K562 (cell line): ENCODE measurements at regions of chr14 and their contacts with region 1.

Region 1: GRCh38 chr14:101972268-101972774 is 7.9 kb downstream of the DYNC1H1 start:
- DNase-seq: peak; percentile 39 to 72 (median 46)
- ATAC-seq: peak; percentile 89
- H3K4me3 ChIP-seq: no peak overlapping the region; the same call in 1 of the 2 replicates
- H3K27ac ChIP-seq: peak overlapping the region; percentile 63
- H3K4me1 ChIP-seq: peaks cover 0 to 13% of the 10 kb centered on the region in 2 experiments; a peak in 3 of 5 replicates
- H3K27me3 ChIP-seq: no peaks in the 10 kb centered on the region
- CTCF ChIP-seq: no peak
- EP300 ChIP-seq: 0 out of 2 replicates have a peak, but pooled peaks have one; percentile 22
- POLR2A ChIP-seq: no peak
- RAD21 ChIP-seq: 0 out of 4 replicates have a peak, but pooled peaks of 1 of the 2 experiments have one; percentile 3

Region 2: DNA sequence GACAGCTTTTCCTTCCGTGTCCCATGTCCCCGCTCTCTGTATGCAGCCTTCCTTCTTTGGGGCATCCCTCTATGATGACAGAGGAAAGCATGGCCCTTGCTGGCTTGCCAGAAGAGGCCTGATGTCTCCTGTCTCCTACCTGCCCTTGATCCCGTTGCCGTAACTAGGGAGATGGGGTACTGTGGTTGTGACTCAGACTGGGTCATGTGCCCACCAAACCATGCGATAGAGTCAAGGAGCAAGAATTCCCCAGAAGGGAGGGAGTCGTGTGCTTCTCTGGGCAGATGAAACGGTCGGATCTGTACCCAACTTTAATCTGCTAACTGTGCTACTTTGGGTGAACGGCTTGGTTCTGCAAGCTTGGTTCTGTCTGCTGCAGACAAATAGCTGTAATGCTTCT is 107.0 kb before region 1 on chr14:
- CTCF ChIA-PET with region 1: no interaction called
- POLR2A ChIA-PET with region 1: no interaction called
- in situ Hi-C with region 1: no loop called
- intact Hi-C with region 1: no loop called
- DNase-seq: no peak
- ATAC-seq: no peak
- H3K4me3 ChIP-seq: no peak overlapping the region
- H3K27ac ChIP-seq: no peak overlapping the region
- H3K4me1 ChIP-seq: no peaks in the 10 kb centered on the region; a peak in 2 of 5 replicates
- H3K27me3 ChIP-seq: no peaks in the 10 kb centered on the region
- CTCF ChIP-seq: no peak
- EP300 ChIP-seq: no peak
- POLR2A ChIP-seq: no peak
- RAD21 ChIP-seq: no peak

Region 3: GRCh38 chr14:101961011-101961721 is 11.2 kb before region 1 on chr14:
- CTCF ChIA-PET with region 1: no interaction called
- POLR2A ChIA-PET with region 1: no interaction called
- in situ Hi-C with region 1: no loop called
- intact Hi-C with region 1: no loop called
- DNase-seq: peak; percentile 56 to 87 (median 62)
- ATAC-seq: peak; percentile 47
- H3K4me3 ChIP-seq: no peak overlapping the region
- H3K27ac ChIP-seq: no peak overlapping the region
- H3K4me1 ChIP-seq: peaks cover 37 to 46% of the 10 kb centered on the region in 2 experiments
- H3K27me3 ChIP-seq: no peaks in the 10 kb centered on the region
- CTCF ChIP-seq: peak; percentile 84 to 96 (median 85)
- EP300 ChIP-seq: no peak
- POLR2A ChIP-seq: no peak
- RAD21 ChIP-seq: peak; percentile 59 to 79

Region 4: DNA sequence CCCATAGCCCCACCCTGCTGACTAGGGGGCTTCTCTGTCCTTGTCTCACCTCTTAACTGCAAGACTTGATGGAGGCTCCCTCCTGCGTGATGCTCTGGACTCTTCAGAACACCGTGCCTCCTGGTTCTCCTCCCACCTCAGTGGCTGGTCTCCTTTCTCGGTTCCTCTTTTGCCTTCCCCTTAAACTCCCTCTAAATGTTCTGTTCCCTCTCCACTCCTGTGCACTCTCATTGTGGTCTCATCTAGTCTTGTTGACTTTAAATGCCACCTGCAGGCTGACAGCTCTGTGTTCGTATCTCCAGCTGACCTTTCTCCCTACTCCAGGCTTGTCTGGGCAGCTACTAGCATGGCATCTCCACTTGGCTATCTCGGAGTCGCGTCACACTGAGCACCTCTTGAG is 20.4 kb after region 1 on chr14:
- CTCF ChIA-PET with region 1: no interaction called
- POLR2A ChIA-PET with region 1: interaction called, 10 read pairs
- in situ Hi-C with region 1: no loop called
- intact Hi-C with region 1: no loop called
- DNase-seq: no peak
- ATAC-seq: no peak
- H3K4me3 ChIP-seq: no peak overlapping the region
- H3K27ac ChIP-seq: no peak overlapping the region
- H3K4me1 ChIP-seq: no peaks in the 10 kb centered on the region
- H3K27me3 ChIP-seq: no peaks in the 10 kb centered on the region
- CTCF ChIP-seq: no peak
- EP300 ChIP-seq: no peak
- POLR2A ChIP-seq: no peak
- RAD21 ChIP-seq: no peak

Region 5: GRCh38 chr14:102125546-102125945 is 153.2 kb after region 1 on chr14:
- CTCF ChIA-PET with region 1: no interaction called
- POLR2A ChIA-PET with region 1: no interaction called
- in situ Hi-C with region 1: no loop called
- intact Hi-C with region 1: no loop called
- DNase-seq: no peak
- ATAC-seq: peak; percentile 25; the same call in 1 of the 3 replicates
- H3K4me3 ChIP-seq: no peak overlapping the region
- H3K27ac ChIP-seq: no peak overlapping the region
- H3K4me1 ChIP-seq: peaks cover 0 to 11% of the 10 kb centered on the region in 2 experiments; a peak in 3 of 5 replicates
- H3K27me3 ChIP-seq: no peaks in the 10 kb centered on the region
- CTCF ChIP-seq: no peak
- EP300 ChIP-seq: no peak
- POLR2A ChIP-seq: no peak
- RAD21 ChIP-seq: no peak